Natural killer cell (primary cell): ENCODE measurements at regions of chr15 and their contacts with region 1.

Region 1: GRCh38 chr15:59492389-59493377 is 54.7 kb downstream of the FAM81A start:
- DNase-seq: peak; percentile 45 to 82
- ATAC-seq: peak; percentile 79 to 89 (median 88)
- H3K4me3 ChIP-seq: no peak overlapping the region
- H3K4me3 Mint-ChIP-seq: no peak overlapping the region
- H3K27ac ChIP-seq: no peak overlapping the region
- H3K27ac Mint-ChIP-seq: no peak overlapping the region
- H3K4me1 ChIP-seq: peaks cover 5% of the 10 kb centered on the region
- H3K4me1 Mint-ChIP-seq: peaks cover 6 to 7% of the 10 kb centered on the region in 2 donors
- H3K27me3 ChIP-seq: no peaks in the 10 kb centered on the region
- H3K27me3 Mint-ChIP-seq: peaks cover 3 to 21% of the 10 kb centered on the region in 2 donors
- CTCF ChIP-seq: peak; percentile 93

Region 2: GRCh38 chr15:58227706-58228543 is 1264.8 kb before region 1 on chr15:
- intact Hi-C with region 1: loop called (anchors 1 kb)
- DNase-seq: peak; percentile 56 to 83
- ATAC-seq: peak; percentile 67 to 75 (median 67)
- H3K4me3 ChIP-seq: no peak overlapping the region
- H3K4me3 Mint-ChIP-seq: no peak overlapping the region
- H3K27ac ChIP-seq: no peak overlapping the region
- H3K27ac Mint-ChIP-seq: no peak overlapping the region
- H3K4me1 ChIP-seq: no peaks in the 10 kb centered on the region
- H3K4me1 Mint-ChIP-seq: no peaks in the 10 kb centered on the region
- H3K27me3 ChIP-seq: peaks cover 2% of the 10 kb centered on the region
- H3K27me3 Mint-ChIP-seq: peaks cover 14 to 35% of the 10 kb centered on the region in 2 donors
- CTCF ChIP-seq: peak; percentile 91

Region 3: GRCh38 chr15:58980351-58980939 is 512.2 kb before region 1 on chr15:
- intact Hi-C with region 1: loop called (anchors 1 kb)
- DNase-seq: peak in 1 of 2 donors; percentile 73
- ATAC-seq: peak in 1 of 3 donors; percentile 57
- H3K4me3 ChIP-seq: no peak overlapping the region
- H3K4me3 Mint-ChIP-seq: no peak overlapping the region
- H3K27ac ChIP-seq: no peak overlapping the region
- H3K27ac Mint-ChIP-seq: no peak overlapping the region
- H3K4me1 ChIP-seq: peaks cover 22% of the 10 kb centered on the region
- H3K4me1 Mint-ChIP-seq: peaks cover 20% of the 10 kb centered on the region in 2 donors
- H3K27me3 ChIP-seq: no peaks in the 10 kb centered on the region
- H3K27me3 Mint-ChIP-seq: no peaks in the 10 kb centered on the region
- CTCF ChIP-seq: peak; percentile 70

Region 4: GRCh38 chr15:59160880-59161593 is 331.6 kb before region 1 on chr15:
- intact Hi-C with region 1: loop called (anchors 5 kb)
- DNase-seq: peak in 1 of 2 donors; percentile 38
- ATAC-seq: peak in 1 of 3 donors; percentile 47
- H3K4me3 ChIP-seq: no peak overlapping the region
- H3K4me3 Mint-ChIP-seq: no peak overlapping the region
- H3K27ac ChIP-seq: no peak overlapping the region
- H3K27ac Mint-ChIP-seq: no peak overlapping the region
- H3K4me1 ChIP-seq: no peaks in the 10 kb centered on the region
- H3K4me1 Mint-ChIP-seq: no peaks in the 10 kb centered on the region
- H3K27me3 ChIP-seq: no peaks in the 10 kb centered on the region
- H3K27me3 Mint-ChIP-seq: no peaks in the 10 kb centered on the region
- CTCF ChIP-seq: peak; percentile 24

Region 5: GRCh38 chr15:59247364-59247763 is 245.3 kb before region 1 on chr15:
- intact Hi-C with region 1: loop called (anchors 1 kb)
- DNase-seq: peak; percentile 42 to 73
- ATAC-seq: peak; percentile 73 to 93 (median 90)
- H3K4me3 ChIP-seq: no peak overlapping the region
- H3K4me3 Mint-ChIP-seq: peak overlapping the region; percentile 6
- H3K27ac ChIP-seq: no peak overlapping the region
- H3K27ac Mint-ChIP-seq: no peak overlapping the region
- H3K4me1 ChIP-seq: peaks cover 12% of the 10 kb centered on the region
- H3K4me1 Mint-ChIP-seq: peaks cover 6 to 13% of the 10 kb centered on the region in 2 donors
- H3K27me3 ChIP-seq: no peaks in the 10 kb centered on the region
- H3K27me3 Mint-ChIP-seq: no peaks in the 10 kb centered on the region
- CTCF ChIP-seq: peak; percentile 72

Region 6: DNA sequence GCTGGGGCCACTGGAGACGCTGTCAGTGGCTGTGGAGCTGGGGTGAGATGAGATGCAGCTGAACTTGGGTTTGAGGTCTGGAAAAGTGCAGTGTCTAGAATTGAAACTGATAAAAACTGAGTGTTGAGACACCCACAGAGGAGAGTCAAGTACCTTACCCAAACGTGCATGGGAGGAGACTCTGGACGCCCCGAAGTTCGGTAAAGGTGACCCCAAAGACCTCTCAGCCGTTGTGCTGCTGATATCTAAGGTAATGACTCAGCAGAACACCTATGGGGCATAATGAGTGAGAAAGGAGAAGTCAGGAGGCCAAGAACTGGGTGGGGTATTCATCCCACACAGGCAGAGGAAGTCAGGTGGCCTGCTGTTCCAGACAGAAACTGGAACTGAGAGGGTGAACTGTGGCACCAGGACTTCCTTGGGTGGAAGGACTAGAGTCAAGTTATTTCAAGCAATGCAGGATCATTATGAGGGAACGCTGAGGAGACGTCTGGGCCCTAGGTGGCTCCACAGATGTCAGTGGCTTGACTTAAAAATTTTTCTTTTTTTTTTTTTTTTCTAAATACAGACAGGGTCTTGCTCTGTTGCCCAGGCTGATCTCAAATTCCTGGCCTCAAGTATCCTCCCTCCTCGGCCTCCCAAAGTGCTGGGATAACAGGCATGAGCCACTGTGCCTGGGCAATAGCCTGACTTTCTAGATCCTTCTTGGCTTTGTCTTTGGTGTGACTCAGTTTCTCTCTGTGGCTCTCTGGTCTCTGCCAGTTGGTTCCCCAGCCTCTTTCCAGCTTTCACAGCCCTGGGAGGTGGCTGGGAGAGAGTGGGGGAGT is 51.3 kb after region 1 on chr15:
- intact Hi-C with region 1: no loop called
- DNase-seq: no peak
- ATAC-seq: no peak
- H3K4me3 ChIP-seq: no peak overlapping the region
- H3K4me3 Mint-ChIP-seq: no peak overlapping the region
- H3K27ac ChIP-seq: no peak overlapping the region
- H3K27ac Mint-ChIP-seq: no peak overlapping the region
- H3K4me1 ChIP-seq: peaks cover 11% of the 10 kb centered on the region
- H3K4me1 Mint-ChIP-seq: peaks cover 6 to 9% of the 10 kb centered on the region in 2 donors
- H3K27me3 ChIP-seq: no peaks in the 10 kb centered on the region
- H3K27me3 Mint-ChIP-seq: peaks cover 15 to 20% of the 10 kb centered on the region in 2 donors
- CTCF ChIP-seq: no peak